Sigmoid colon (tissue), 7 donors: ENCODE measurements at regions of chr1 and their contacts with region 1.

Region 1: GRCh38 chr1:234997201-234997895 is 131.3 kb downstream of the TOMM20 start:
- DNase-seq: peak; percentile 100
- H3K4me3 ChIP-seq: peak overlapping the region in 1 of 4 donors; percentile 3
- H3K27ac ChIP-seq: peak overlapping the region; percentile 89 to 95 (median 90)
- H3K4me1 ChIP-seq: peaks cover 0 to 45% (median 42%) of the 10 kb centered on the region in 4 donors
- H3K27me3 ChIP-seq: no peaks in the 10 kb centered on the region
- CTCF ChIP-seq: no peak
- EP300 ChIP-seq: peak; percentile 98 to 100 (median 99)
- POLR2A ChIP-seq: peak; percentile 29 to 42

Region 2: GRCh38 chr1:234499119-234499942 is 498.0 kb before region 1 on chr1:
- intact Hi-C with region 1: loop called (anchors 5 kb)
- DNase-seq: peak; percentile 96
- H3K4me3 ChIP-seq: peak overlapping the region in 3 of 4 donors; percentile 20 to 34 (median 21)
- H3K27ac ChIP-seq: peak overlapping the region; percentile 80 to 89 (median 82)
- H3K4me1 ChIP-seq: peaks cover 0 to 38% (median 29%) of the 10 kb centered on the region in 4 donors
- H3K27me3 ChIP-seq: no peaks in the 10 kb centered on the region
- CTCF ChIP-seq: peak; percentile 94 to 97 (median 95)
- EP300 ChIP-seq: peak in 2 of 4 donors; percentile 56 to 57
- POLR2A ChIP-seq: peak in 1 of 2 donors; percentile 17

Region 3: GRCh38 chr1:234544087-234544579 is 453.2 kb before region 1 on chr1:
- intact Hi-C with region 1: loop called (anchors 1 kb)
- DNase-seq: peak; percentile 95
- H3K4me3 ChIP-seq: no peak overlapping the region
- H3K27ac ChIP-seq: peak overlapping the region; percentile 88 to 99 (median 96)
- H3K4me1 ChIP-seq: peaks cover 0 to 74% (median 71%) of the 10 kb centered on the region in 4 donors
- H3K27me3 ChIP-seq: no peaks in the 10 kb centered on the region
- CTCF ChIP-seq: no peak
- EP300 ChIP-seq: peak; percentile 71 to 94 (median 80)
- POLR2A ChIP-seq: no peak

Region 4: DNA sequence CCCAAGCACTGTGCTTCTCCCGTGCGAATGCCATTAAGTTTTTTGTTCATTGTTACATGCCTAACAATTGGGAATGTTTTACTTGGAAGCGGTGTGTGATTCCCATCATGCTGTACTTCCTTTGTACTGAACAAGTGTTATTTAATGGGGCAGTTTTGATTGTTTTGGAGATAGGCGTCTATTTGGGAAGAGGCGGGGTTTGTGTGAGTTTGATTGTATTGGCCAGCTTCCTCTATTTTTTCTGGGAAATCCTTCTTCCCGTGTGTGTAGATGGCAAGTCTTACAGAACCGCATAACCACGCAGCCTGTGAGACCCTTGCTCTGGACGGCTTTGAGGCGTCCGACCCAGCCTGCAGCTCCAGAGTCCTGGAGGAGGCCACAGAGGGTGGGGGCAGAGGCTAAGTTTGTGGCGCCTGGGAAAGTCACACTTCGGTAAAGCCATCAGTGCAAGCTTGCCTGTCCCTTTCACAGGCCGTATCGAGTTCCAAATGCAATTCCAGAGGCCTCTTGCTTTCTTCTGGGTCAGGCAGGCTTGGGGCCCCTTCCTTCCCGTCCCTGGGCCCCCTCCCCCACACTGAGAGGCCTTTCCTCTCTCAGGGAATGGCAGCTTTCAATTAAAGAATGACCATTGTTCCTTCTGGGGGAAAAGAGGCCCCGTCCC is 79.0 kb before region 1 on chr1:
- intact Hi-C with region 1: loop called (anchors 5 kb)
- DNase-seq: peak; percentile 63
- H3K4me3 ChIP-seq: no peak overlapping the region
- H3K27ac ChIP-seq: peak overlapping the region; percentile 73 to 84 (median 76)
- H3K4me1 ChIP-seq: peaks cover 0 to 52% (median 36%) of the 10 kb centered on the region in 4 donors
- H3K27me3 ChIP-seq: no peaks in the 10 kb centered on the region
- CTCF ChIP-seq: no peak
- EP300 ChIP-seq: peak in 2 of 4 donors; percentile 6 to 73
- POLR2A ChIP-seq: no peak

Region 5: DNA sequence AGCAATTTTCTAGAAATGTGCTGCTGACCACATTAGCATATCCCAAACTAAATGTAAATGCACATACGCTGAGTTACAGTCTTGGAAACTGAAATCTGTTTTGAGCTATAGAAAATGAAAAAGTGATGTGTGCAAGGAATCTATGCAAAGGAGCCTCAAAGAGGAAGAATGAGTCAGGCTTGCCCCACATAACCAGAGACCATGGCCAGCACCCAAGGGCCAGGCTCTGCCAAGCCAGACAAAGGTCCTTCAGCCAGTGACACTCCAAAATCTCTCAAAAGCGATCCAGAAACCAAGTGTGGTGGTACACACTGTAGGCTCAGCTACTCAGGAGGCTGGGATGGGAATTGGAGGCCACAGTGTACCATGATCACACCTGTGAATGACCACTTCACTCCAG is 63.9 kb before region 1 on chr1:
- intact Hi-C with region 1: no loop called
- DNase-seq: no peak
- H3K4me3 ChIP-seq: no peak overlapping the region
- H3K27ac ChIP-seq: peak overlapping the region in 1 of 4 donors; percentile 10
- H3K4me1 ChIP-seq: peaks cover 0 to 10% (median 3%) of the 10 kb centered on the region in 4 donors
- H3K27me3 ChIP-seq: no peaks in the 10 kb centered on the region
- CTCF ChIP-seq: no peak
- EP300 ChIP-seq: no peak
- POLR2A ChIP-seq: no peak

Region 6: DNA sequence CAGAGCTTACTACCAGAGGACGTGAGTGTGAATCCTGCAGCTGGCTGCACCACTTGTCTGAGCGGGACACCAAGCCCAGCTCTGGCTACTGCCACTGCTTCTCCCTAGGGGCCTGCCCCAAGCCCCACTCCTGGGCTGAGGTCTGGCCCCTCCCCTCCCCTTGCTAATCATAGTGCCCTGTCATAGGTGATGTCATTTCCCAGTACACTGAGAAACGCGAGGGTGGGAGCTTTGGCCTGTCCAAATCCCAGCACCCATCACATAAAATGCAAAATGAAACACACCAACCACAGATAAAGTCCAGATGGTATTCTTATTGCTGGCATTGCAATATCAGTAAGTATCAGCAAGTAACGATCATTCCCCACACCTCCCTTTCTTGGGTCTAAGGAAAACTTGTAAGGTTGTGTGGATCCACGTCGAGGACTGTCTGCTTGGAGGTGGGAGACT is 53.6 kb after region 1 on chr1:
- intact Hi-C with region 1: loop called (anchors 2 kb)
- DNase-seq: no peak
- H3K4me3 ChIP-seq: no peak overlapping the region
- H3K27ac ChIP-seq: peak overlapping the region in 1 of 4 donors; percentile 89
- H3K4me1 ChIP-seq: peaks cover 0 to 44% (median 36%) of the 10 kb centered on the region in 4 donors
- H3K27me3 ChIP-seq: no peaks in the 10 kb centered on the region
- CTCF ChIP-seq: no peak
- EP300 ChIP-seq: peak in 1 of 4 donors; percentile 43
- POLR2A ChIP-seq: no peak

Region 7: GRCh38 chr1:235075188-235075926 is 78.0 kb after region 1 on chr1:
- intact Hi-C with region 1: loop called (anchors 5 kb)
- DNase-seq: peak; percentile 81
- H3K4me3 ChIP-seq: no peak overlapping the region
- H3K27ac ChIP-seq: peak overlapping the region; percentile 69 to 89 (median 82)
- H3K4me1 ChIP-seq: peaks cover 0 to 39% (median 35%) of the 10 kb centered on the region in 4 donors
- H3K27me3 ChIP-seq: no peaks in the 10 kb centered on the region
- CTCF ChIP-seq: no peak
- EP300 ChIP-seq: peak in 2 of 4 donors; percentile 39 to 40
- POLR2A ChIP-seq: no peak

Region 8: GRCh38 chr1:235128456-235129328 is 131.3 kb after region 1 on chr1 and contains the start of gene TOMM20:
- intact Hi-C with region 1: no loop called
- DNase-seq: peak; percentile 99
- H3K4me3 ChIP-seq: peak within 1 kb of the TSS; percentile 78 to 94 (median 81)
- H3K27ac ChIP-seq: peak within 1 kb of the TSS; percentile 88 to 92 (median 91)
- H3K4me1 ChIP-seq: peaks cover 0 to 30% (median 26%) of the 10 kb centered on the region in 4 donors
- H3K27me3 ChIP-seq: no peaks in the 10 kb centered on the region
- CTCF ChIP-seq: no peak
- EP300 ChIP-seq: peak in 1 of 4 donors; percentile 73
- POLR2A ChIP-seq: peak; percentile 54 to 72
- total RNA-seq, gene TOMM20: 72.0 to 128 (median 112) TPM